ENCODE measurements at regions of chr7 and their contacts with region 1.

Region 1: DNA sequence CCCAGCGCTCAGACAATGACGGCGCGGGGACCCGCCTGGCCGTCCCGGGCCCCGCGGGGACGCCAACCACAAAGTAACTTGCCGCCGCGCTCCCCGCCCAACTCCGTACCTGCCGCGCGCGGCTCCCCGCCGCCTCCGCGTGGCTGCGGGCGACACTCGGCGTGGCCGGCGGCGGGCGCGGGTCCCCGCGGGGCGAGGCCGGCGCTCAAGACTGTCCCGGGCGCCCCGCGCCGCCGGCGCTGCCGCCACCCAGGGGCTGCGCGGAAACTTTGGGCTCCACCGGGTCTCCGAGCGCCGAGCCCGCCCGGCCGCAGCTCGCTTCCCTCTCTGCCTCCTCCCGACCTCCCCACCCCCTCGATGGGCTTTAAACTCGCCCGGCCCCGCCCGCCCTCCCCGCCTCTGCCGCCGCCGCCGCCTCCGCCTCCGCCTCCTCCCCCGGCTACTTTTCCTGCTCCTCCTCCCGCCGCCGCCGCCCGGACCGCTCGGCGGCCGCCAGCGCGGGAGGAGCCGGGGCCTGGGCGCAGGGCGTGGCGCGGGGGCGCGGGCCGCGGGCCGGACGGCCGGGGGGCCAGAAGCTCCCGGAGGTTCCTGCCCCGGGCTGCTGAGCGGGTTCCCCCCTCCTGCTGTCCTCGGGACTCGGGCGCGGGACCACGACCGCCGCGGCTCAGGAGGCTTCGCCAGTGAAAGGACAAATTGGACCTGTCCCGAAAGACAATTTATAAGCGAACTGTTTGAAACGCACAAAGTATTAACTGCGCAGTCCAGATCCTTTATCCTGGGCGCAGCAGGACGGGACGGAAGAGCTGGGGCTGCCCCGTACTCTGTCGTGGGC is 10.6 kb upstream of the GRB10 start:
- DNase-seq: peak; percentile 87
- H3K4me3 ChIP-seq: peak overlapping the region; percentile 52 to 78 (median 66)
- H3K27ac ChIP-seq: peak overlapping the region; percentile 78 to 87 (median 86)
- H3K4me1 ChIP-seq: peaks cover 0 to 42% (median 24%) of the 10 kb centered on the region in 4 donors
- H3K27me3 ChIP-seq: no peaks in the 10 kb centered on the region
- CTCF ChIP-seq: no peak
- EP300 ChIP-seq: no peak
- POLR2A ChIP-seq: no peak

Region 2: DNA sequence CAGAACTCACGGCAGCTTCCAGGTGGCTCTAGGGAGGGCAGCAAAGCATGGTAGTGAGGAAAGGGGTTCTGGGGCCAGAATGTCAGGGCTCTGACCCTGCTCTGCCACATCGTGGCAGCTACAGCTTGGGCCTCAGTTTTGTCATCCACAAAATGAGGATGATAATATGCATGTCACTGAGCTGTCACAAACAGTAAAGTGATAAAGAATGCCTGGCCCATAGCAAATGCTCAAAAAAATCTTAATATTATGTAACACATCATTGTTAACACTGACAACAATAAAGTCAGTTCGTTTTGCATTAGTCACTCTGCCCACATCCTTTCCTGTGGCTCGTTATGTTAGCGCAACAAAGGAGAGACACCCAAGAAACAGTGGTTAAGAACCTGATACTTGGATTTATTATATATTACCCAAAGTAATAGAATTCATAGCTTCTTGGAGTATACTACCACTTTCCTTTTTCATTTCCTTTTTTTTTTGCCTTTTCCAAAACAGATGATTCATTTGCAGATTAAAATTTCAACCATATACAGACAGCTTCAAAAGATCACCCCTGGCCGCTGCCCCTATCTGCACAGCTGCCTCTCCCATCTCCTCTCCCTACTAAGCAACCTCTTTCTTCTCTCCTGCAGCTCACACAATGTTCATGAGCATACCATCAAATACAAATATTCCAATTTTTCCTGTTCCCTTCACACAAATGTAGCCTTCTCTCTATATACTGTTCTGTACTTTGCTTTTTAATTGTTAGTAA is 182.6 kb before region 1 on chr7:
- intact Hi-C with region 1: loop called (anchors 5 kb)
- DNase-seq: no peak
- H3K4me3 ChIP-seq: no peak overlapping the region
- H3K27ac ChIP-seq: no peak overlapping the region
- H3K4me1 ChIP-seq: peaks cover 0 to 26% (median 17%) of the 10 kb centered on the region in 4 donors
- H3K27me3 ChIP-seq: no peaks in the 10 kb centered on the region
- CTCF ChIP-seq: no peak
- EP300 ChIP-seq: no peak
- POLR2A ChIP-seq: no peak

Region 3: DNA sequence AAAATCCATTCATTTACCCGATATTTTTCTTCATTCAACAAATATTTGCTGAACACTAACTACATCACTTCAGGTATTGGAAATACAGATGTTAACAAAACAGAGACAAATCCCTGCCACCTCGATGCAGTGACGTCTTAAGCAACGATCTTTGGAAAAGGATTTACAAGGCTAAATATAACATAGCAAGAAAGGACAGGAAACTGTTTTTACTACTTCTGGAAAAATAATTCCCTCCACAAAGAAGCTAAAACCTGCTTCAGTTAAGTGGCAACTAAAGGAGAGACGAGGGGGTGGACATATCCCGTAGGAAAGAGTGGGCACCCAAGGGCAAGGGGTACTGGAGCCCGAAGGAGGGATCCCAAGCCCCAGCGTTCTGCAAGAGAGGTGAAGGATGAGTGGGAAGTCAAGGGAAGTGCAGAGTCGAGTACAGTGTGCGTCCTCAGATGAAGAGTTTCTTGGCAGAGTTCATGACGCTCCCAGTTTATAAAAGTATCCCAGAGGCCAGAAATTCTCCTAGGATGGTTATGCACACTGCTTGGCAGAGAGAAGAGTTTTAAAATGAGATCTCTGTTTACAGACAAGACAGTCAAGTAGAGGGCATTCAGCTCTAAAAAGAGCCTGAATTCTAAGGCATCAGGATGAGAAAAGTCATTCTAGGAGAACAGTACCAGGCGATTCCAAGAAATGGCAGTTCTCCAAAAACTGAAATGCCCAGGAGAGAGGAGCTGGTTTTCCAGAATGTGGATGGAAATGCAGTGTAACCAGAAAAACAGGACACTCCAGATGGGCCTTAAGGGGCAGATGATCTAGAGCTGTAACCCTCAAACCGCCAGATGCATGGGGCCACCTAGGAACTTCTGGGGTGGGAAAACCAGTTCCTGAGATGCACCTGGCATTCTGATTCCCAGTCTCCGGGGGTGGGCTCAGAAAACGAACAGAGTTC is 107.9 kb before region 1 on chr7:
- intact Hi-C with region 1: loop called (anchors 2 kb)
- DNase-seq: no peak
- H3K4me3 ChIP-seq: peak overlapping the region in 1 of 4 donors; percentile 14
- H3K27ac ChIP-seq: peak overlapping the region; percentile 73 to 91 (median 84)
- H3K4me1 ChIP-seq: peaks cover 0 to 79% (median 70%) of the 10 kb centered on the region in 4 donors
- H3K27me3 ChIP-seq: no peaks in the 10 kb centered on the region
- CTCF ChIP-seq: no peak
- EP300 ChIP-seq: peak in 3 of 4 donors; percentile 65 to 89 (median 68)
- POLR2A ChIP-seq: no peak

Region 4: DNA sequence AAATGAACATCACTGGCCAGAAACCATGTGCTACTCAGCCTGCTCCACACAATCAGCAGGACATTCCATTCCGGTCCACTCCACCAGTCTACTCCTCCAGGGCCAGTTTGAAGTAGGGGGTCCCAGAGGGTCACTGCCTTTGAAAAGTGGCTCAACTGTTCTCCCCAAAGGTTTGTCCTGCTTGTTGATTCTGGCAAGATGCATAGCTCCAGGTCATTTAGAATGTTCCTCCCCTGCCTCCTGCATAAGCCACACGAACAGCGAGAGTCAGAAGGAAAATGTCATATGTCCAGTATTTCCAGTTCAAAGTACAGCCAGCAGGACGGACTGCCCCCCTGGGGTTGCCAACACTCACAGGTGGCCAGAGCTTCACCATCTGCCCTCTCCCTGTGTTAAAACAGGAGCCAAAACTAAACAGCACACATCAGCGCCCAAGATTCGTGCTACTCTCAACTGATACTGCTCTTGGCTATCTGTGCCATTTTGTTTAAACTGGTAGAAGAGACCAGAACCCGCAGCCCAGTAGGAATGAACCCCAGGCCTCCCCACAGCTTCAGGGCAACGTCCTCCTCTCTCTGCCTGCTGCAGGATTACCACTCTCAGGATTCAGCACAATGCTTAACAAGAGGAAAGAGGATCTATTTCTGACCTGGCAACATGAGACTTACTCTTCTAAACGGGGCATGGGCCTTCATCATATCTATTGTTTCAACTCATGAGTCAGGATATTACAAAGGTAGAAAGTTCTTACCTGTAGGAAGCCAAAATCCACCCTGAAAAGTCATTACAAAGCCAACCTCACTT is 21.9 kb before region 1 on chr7:
- intact Hi-C with region 1: no loop called
- DNase-seq: no peak
- H3K4me3 ChIP-seq: no peak overlapping the region
- H3K27ac ChIP-seq: no peak overlapping the region
- H3K4me1 ChIP-seq: peaks cover 0 to 41% (median 24%) of the 10 kb centered on the region in 4 donors
- H3K27me3 ChIP-seq: no peaks in the 10 kb centered on the region
- CTCF ChIP-seq: no peak
- EP300 ChIP-seq: no peak
- POLR2A ChIP-seq: no peak

Region 5: GRCh38 chr7:50962962-50963374 is 169.6 kb after region 1 on chr7:
- intact Hi-C with region 1: no loop called
- DNase-seq: peak; percentile 76
- H3K4me3 ChIP-seq: no peak overlapping the region
- H3K27ac ChIP-seq: no peak overlapping the region
- H3K4me1 ChIP-seq: peaks cover 0 to 14% (median 9%) of the 10 kb centered on the region in 4 donors
- H3K27me3 ChIP-seq: no peaks in the 10 kb centered on the region
- CTCF ChIP-seq: no peak
- EP300 ChIP-seq: no peak
- POLR2A ChIP-seq: no peak

Region 6: GRCh38 chr7:51067757-51068156 is 274.4 kb after region 1 on chr7:
- intact Hi-C with region 1: loop called (anchors 5 kb)
- DNase-seq: peak; percentile 76
- H3K4me3 ChIP-seq: no peak overlapping the region
- H3K27ac ChIP-seq: no peak overlapping the region
- H3K4me1 ChIP-seq: peaks cover 0 to 18% (median 4%) of the 10 kb centered on the region in 4 donors
- H3K27me3 ChIP-seq: no peaks in the 10 kb centered on the region
- CTCF ChIP-seq: peak; percentile 39 to 73 (median 71)
- EP300 ChIP-seq: no peak
- POLR2A ChIP-seq: no peak